Activated CD4-positive, alpha-beta T cell treated with anti-CD3 and anti-CD28 coated beads for 36 hours (primary cell): ENCODE measurements at regions of chr19 and their contacts with region 1.

Region 1: DNA sequence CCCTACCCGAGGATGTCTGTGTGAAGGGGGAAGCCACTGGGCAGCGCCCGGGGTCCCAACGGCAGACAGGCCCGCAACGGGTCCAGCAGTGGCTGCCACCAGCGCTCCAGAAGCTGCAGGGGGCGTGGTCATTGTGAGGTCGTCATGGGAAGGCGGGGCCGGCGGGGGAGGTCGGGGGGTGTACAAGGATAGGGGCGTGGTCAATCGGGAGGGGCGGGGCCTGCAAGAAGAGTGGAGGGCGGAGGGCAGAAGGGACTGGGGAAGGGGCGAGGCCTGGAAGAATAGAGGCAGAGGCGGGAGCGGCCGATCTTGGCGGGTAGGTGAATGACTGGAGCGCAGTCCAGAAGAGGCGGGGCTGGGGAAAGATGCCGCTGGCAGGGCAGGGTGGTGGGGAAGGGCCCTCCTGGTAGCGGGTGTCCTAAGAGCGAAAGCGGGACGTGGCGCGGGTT is 4.4 kb downstream of the FUZ start:
- DNase-seq: peak; percentile 95
- ATAC-seq: peak; percentile 52
- H3K4me3 Mint-ChIP-seq: peak overlapping the region; percentile 78
- H3K27ac Mint-ChIP-seq: peak overlapping the region; percentile 73
- H3K4me1 Mint-ChIP-seq: peaks cover 22% of the 10 kb centered on the region
- H3K27me3 Mint-ChIP-seq: no peaks in the 10 kb centered on the region

Region 2: GRCh38 chr19:49712397-49712859 is 96.3 kb before region 1 on chr19:
- CTCF ChIA-PET with region 1: no interaction called
- POLR2A ChIA-PET with region 1: no interaction called
- intact Hi-C with region 1: loop called in 1 of 2 experiments (anchors 1 kb)
- DNase-seq: no peak
- ATAC-seq: no peak
- H3K4me3 Mint-ChIP-seq: no peak overlapping the region
- H3K27ac Mint-ChIP-seq: no peak overlapping the region
- H3K4me1 Mint-ChIP-seq: peaks cover 6% of the 10 kb centered on the region
- H3K27me3 Mint-ChIP-seq: no peaks in the 10 kb centered on the region